PC-9 (cell line): ENCODE measurements at regions of chr7 and their contacts with region 1.

Region 1: GRCh38 chr7:117993377-117994003 is 120.2 kb upstream of the CTTNBP2 start:
- DNase-seq: no peak
- H3K4me3 ChIP-seq: no peak overlapping the region
- H3K27ac ChIP-seq: no peak overlapping the region
- H3K4me1 ChIP-seq: peaks cover 8% of the 10 kb centered on the region; the same call in 1 of the 2 replicates
- H3K27me3 ChIP-seq: no peaks in the 10 kb centered on the region
- CTCF ChIP-seq: peak; percentile 55

Region 2: GRCh38 chr7:118094040-118094439 is 100.5 kb after region 1 on chr7:
- CTCF ChIA-PET with region 1: no interaction called
- POLR2A ChIA-PET with region 1: no interaction called
- intact Hi-C with region 1: loop called (anchors 10 kb)
- DNase-seq: no peak
- H3K4me3 ChIP-seq: no peak overlapping the region
- H3K27ac ChIP-seq: no peak overlapping the region
- H3K4me1 ChIP-seq: no peaks in the 10 kb centered on the region
- H3K27me3 ChIP-seq: no peaks in the 10 kb centered on the region
- CTCF ChIP-seq: no peak

Region 3: GRCh38 chr7:118183786-118184564 is 190.5 kb after region 1 on chr7 and contains the start of gene LSM8:
- CTCF ChIA-PET with region 1: no interaction called
- POLR2A ChIA-PET with region 1: no interaction called
- intact Hi-C with region 1: loop called (anchors 5 kb)
- DNase-seq: peak; percentile 95 to 97
- H3K4me3 ChIP-seq: peak within 1 kb of the TSS; percentile 91
- H3K27ac ChIP-seq: peak within 1 kb of the TSS; percentile 66
- H3K4me1 ChIP-seq: peaks cover 18% of the 10 kb centered on the region
- H3K27me3 ChIP-seq: no peaks in the 10 kb centered on the region
- CTCF ChIP-seq: no peak
- total RNA-seq, gene LSM8: 55.0 and 61.5 TPM in 2 replicates